CD4-positive, alpha-beta memory T cell (primary cell): ENCODE measurements at regions of chr14 and their contacts with region 1.

Region 1: GRCh38 chr14:22531451-22532344 is 57.3 kb downstream of the DAD1 start:
- DNase-seq: peak in 2 of 5 donors; percentile 51 to 65
- H3K4me3 ChIP-seq: peak overlapping the region; percentile 44 to 49
- H3K4me3 Mint-ChIP-seq: peak overlapping the region; percentile 84 to 91 (median 90)
- H3K27ac ChIP-seq: peak overlapping the region; percentile 58
- H3K27ac Mint-ChIP-seq: peak overlapping the region; percentile 92 to 100 (median 97)
- H3K4me1 ChIP-seq: peaks cover 96% of the 10 kb centered on the region
- H3K4me1 Mint-ChIP-seq: peaks cover 78 to 99% (median 86%) of the 10 kb centered on the region in 4 donors
- H3K27me3 ChIP-seq: no peaks in the 10 kb centered on the region
- H3K27me3 Mint-ChIP-seq: no peaks in the 10 kb centered on the region

Region 2: GRCh38 chr14:22427771-22428231 is 103.9 kb before region 1 on chr14:
- CTCF ChIA-PET with region 1: no interaction called
- POLR2A ChIA-PET with region 1: no interaction called
- intact Hi-C with region 1: no loop called
- DNase-seq: no peak
- H3K4me3 ChIP-seq: no peak overlapping the region
- H3K4me3 Mint-ChIP-seq: no peak overlapping the region
- H3K27ac ChIP-seq: no peak overlapping the region
- H3K27ac Mint-ChIP-seq: no peak overlapping the region
- H3K4me1 ChIP-seq: no peaks in the 10 kb centered on the region
- H3K4me1 Mint-ChIP-seq: no peaks in the 10 kb centered on the region
- H3K27me3 ChIP-seq: no peaks in the 10 kb centered on the region
- H3K27me3 Mint-ChIP-seq: no peaks in the 10 kb centered on the region

Region 3: DNA sequence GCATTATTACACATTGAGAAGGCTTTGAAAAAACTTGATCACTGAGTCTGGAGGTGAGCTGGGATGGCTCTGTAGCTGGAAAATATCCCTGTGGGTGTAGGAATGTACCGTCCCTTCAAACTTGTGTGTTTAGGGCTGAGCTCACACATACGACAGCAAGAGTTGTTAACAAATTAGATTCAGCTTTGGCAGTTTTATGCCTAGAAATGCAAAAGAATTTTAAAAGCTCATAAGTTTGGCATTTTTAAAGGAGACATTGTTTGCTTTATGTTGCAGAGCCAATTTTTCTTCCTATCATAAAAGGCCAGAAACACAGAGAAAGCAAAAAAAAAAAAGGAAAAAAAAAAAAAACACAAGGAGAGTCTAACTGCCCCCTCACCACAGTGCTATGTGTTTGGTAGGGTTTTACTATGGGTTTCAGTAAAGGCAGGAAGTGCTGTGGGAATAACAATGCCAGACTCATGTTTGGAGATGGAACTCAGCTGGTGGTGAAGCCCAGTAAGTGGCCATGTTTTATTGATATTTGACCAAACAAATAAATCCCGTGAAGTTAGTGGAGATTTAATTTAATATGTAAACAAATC is 21.1 kb before region 1 on chr14:
- CTCF ChIA-PET with region 1: interaction called, 8 read pairs
- POLR2A ChIA-PET with region 1: interaction called, 1,012 read pairs
- intact Hi-C with region 1: loop called (anchors 2 kb)
- DNase-seq: no peak
- H3K4me3 ChIP-seq: peak overlapping the region in 1 of 2 donors; percentile 29
- H3K4me3 Mint-ChIP-seq: peak overlapping the region; percentile 76 to 92 (median 89)
- H3K27ac ChIP-seq: peak overlapping the region; percentile 76
- H3K27ac Mint-ChIP-seq: peak overlapping the region; percentile 95 to 100 (median 98)
- H3K4me1 ChIP-seq: peaks cover 99% of the 10 kb centered on the region
- H3K4me1 Mint-ChIP-seq: peaks cover 56 to 93% (median 72%) of the 10 kb centered on the region in 4 donors
- H3K27me3 ChIP-seq: no peaks in the 10 kb centered on the region
- H3K27me3 Mint-ChIP-seq: no peaks in the 10 kb centered on the region

Region 4: DNA sequence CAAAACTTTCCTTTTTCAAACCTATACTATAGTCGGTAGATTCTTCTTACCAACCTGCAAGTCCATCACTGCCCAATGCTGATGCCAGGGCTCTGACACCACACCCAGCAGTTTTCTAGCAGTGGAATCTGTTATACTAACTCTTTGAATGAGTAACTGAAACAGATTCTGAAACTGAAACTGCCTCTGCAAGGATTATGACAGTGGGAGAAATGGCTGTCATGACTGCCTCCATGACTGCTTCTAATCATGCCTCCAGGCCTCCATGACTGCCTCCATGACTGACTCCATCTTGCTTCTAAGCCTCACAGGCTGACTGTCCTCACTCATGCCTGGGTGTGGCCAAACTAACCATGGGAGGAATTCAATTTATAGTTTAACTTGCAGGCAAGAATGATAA is 205.4 kb after region 1 on chr14:
- CTCF ChIA-PET with region 1: no interaction called
- POLR2A ChIA-PET with region 1: no interaction called
- intact Hi-C with region 1: no loop called
- DNase-seq: no peak
- H3K4me3 ChIP-seq: no peak overlapping the region
- H3K4me3 Mint-ChIP-seq: no peak overlapping the region
- H3K27ac ChIP-seq: no peak overlapping the region
- H3K27ac Mint-ChIP-seq: no peak overlapping the region
- H3K4me1 ChIP-seq: peaks cover 3% of the 10 kb centered on the region
- H3K4me1 Mint-ChIP-seq: peaks cover 0 to 2% (median 0%) of the 10 kb centered on the region in 4 donors
- H3K27me3 ChIP-seq: no peaks in the 10 kb centered on the region
- H3K27me3 Mint-ChIP-seq: peaks cover 3 to 4% of the 10 kb centered on the region in 2 donors

Region 5: GRCh38 chr14:23269193-23269592 is 737.5 kb after region 1 on chr14:
- CTCF ChIA-PET with region 1: no interaction called
- POLR2A ChIA-PET with region 1: no interaction called
- intact Hi-C with region 1: no loop called
- DNase-seq: no peak
- H3K4me3 ChIP-seq: no peak overlapping the region
- H3K4me3 Mint-ChIP-seq: no peak overlapping the region
- H3K27ac ChIP-seq: no peak overlapping the region
- H3K27ac Mint-ChIP-seq: no peak overlapping the region
- H3K4me1 ChIP-seq: no peaks in the 10 kb centered on the region
- H3K4me1 Mint-ChIP-seq: no peaks in the 10 kb centered on the region
- H3K27me3 ChIP-seq: no peaks in the 10 kb centered on the region
- H3K27me3 Mint-ChIP-seq: peaks cover 1 to 7% of the 10 kb centered on the region in 2 donors